ENCODE measurements at regions of chr6 and their contacts with region 1.

Region 1: DNA sequence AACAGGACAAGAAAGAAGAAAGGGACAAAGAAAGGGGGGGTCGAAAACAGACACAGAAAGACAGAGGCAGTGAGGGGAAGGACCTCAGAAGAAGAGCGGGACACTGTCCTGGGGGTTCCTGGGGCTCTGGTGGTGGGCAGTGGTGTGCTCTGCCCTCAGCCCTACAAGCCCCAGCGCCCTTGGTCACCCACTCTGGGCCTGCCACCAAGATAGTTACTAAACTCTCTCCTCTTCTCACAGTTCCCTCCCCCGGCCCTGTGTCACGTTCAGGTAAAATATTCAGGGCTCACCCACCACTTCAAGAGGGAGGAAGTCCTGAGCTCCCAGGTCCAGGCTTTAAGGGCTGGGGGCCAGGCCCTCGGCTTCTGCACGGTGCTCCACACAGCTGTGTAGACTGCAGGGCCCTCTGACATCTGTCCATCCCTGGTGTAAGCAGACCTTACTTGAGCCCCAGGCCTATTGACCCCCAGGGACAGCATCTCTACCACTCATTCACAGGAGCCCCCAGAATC is 87.4 kb downstream of the MRPL14 start:
- DNase-seq: peak in 1 of 2 donors; percentile 35
- H3K4me3 ChIP-seq: no peak overlapping the region
- H3K27ac ChIP-seq: peak overlapping the region; percentile 19 to 79
- H3K4me1 ChIP-seq: peaks cover 9 to 36% of the 10 kb centered on the region in 2 donors
- H3K27me3 ChIP-seq: no peaks in the 10 kb centered on the region
- CTCF ChIP-seq: no peak
- POLR2A ChIP-seq: no peak

Region 2: GRCh38 chr6:44065443-44066140 is 25.7 kb after region 1 on chr6:
- intact Hi-C with region 1: loop called (anchors 1 kb)
- DNase-seq: no peak
- H3K4me3 ChIP-seq: no peak overlapping the region
- H3K27ac ChIP-seq: peak overlapping the region; percentile 96
- H3K4me1 ChIP-seq: peaks cover 4 to 20% of the 10 kb centered on the region in 2 donors
- H3K27me3 ChIP-seq: no peaks in the 10 kb centered on the region
- CTCF ChIP-seq: no peak
- POLR2A ChIP-seq: no peak

Region 3: GRCh38 chr6:44086931-44087574 is 47.2 kb after region 1 on chr6:
- intact Hi-C with region 1: no loop called
- DNase-seq: peak in 1 of 2 donors; percentile 69
- H3K4me3 ChIP-seq: no peak overlapping the region
- H3K27ac ChIP-seq: peak overlapping the region in 1 of 2 donors; percentile 1
- H3K4me1 ChIP-seq: no peaks in the 10 kb centered on the region
- H3K27me3 ChIP-seq: no peaks in the 10 kb centered on the region
- CTCF ChIP-seq: no peak
- POLR2A ChIP-seq: no peak